ENCODE measurements at regions of chr3 and their contacts with region 1.

Region 1: GRCh38 chr3:1348547-1348946 is 255.7 kb downstream of the CNTN6 start:
- DNase-seq: no peak
- H3K4me3 Mint-ChIP-seq: no peak overlapping the region
- H3K27ac Mint-ChIP-seq: no peak overlapping the region
- H3K4me1 Mint-ChIP-seq: no peaks in the 10 kb centered on the region
- H3K27me3 Mint-ChIP-seq: no peaks in the 10 kb centered on the region
- CTCF ChIP-seq: no peak

Region 2: DNA sequence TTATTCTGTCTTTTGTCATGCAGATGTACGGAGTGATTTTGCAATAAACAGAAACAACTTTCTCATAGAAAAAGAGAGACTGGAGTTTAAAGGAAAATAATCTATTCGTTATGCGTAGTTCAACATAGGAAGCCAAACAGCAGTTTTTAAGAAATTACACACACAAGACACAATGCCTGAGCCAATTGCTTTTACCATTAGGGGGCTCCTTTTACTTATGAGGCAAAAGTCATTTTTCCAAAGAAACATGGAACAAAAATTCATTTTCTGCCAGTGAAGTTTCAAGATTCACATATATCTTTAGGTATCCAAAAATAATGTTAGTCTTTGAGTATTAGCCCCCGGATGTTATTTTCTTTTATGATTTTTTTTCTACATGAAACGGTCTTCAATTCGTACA is 245.0 kb before region 1 on chr3:
- CTCF ChIA-PET with region 1: no interaction called
- intact Hi-C with region 1: loop called (anchors 2 kb)
- DNase-seq: no peak
- H3K4me3 Mint-ChIP-seq: no peak overlapping the region
- H3K27ac Mint-ChIP-seq: no peak overlapping the region
- H3K4me1 Mint-ChIP-seq: no peaks in the 10 kb centered on the region
- H3K27me3 Mint-ChIP-seq: no peaks in the 10 kb centered on the region
- CTCF ChIP-seq: no peak

Region 3: DNA sequence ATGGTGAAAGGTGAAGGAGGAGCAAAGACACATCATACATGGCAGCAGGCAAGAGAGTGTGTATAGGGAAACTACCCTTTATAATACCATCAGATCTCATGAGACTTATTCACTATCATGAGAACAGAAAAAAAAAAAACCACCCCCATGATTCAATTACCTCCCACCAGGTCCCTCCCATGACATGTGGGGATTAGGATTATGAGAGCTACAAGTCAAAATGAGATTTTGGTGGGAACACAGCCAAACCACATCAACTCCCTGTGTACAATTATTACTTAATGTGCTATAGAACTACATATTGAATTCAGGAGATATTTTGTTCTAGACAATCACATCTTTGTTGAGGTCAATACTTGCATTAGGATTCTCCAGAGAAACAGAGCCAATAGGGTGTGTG is 57.7 kb after region 1 on chr3:
- CTCF ChIA-PET with region 1: no interaction called
- intact Hi-C with region 1: no loop called
- DNase-seq: no peak
- H3K4me3 Mint-ChIP-seq: no peak overlapping the region
- H3K27ac Mint-ChIP-seq: no peak overlapping the region
- H3K4me1 Mint-ChIP-seq: no peaks in the 10 kb centered on the region
- H3K27me3 Mint-ChIP-seq: no peaks in the 10 kb centered on the region
- CTCF ChIP-seq: no peak